ENCODE measurements at regions of chr14 and their contacts with region 1.

Region 1: DNA sequence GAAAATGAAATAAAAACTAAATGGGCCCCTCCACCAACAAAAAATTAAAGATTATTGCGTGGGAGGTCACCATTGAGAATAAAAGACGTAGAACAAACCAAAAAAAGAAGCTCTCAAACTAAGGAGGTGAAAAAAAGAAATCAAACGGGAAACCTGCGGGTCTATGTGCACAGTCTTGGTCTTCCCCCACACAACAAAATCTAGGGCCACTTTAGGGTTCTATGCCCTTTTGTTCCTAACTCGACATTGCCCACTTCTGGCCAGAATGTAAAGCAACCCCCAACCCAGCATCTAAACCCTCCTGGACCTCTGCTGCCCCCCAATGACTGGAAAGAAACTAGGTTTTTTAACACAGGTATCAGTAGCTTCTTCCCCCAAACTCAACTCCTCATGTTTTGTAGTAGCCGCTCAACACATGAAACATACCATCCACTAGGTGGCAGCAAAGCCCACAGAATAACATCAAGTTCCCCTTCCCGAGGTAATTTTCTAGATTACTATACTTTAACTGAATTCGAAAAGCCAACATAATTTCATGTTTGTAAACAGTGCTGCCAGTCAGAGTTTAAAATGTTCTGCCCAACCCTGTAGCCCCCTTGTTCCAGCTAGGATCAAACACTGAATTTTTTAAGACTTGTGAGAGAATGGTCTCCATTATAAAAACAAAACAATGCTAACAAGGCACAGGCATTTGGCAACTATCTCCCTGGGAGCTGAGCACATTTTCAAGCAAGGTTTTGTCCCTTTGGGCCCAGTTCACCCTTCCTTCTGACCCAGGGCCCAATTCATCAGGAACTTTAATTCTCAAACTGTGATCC is 18.7 kb downstream of the DAD1 start:
- DNase-seq: peak; percentile 83
- H3K4me3 ChIP-seq: no peak overlapping the region
- H3K27ac ChIP-seq: no peak overlapping the region
- H3K4me1 ChIP-seq: peaks cover 40% of the 10 kb centered on the region
- H3K27me3 ChIP-seq: no peaks in the 10 kb centered on the region
- CTCF ChIP-seq: peak; percentile 55 to 63
- POLR2A ChIP-seq: no peak

Region 2: DNA sequence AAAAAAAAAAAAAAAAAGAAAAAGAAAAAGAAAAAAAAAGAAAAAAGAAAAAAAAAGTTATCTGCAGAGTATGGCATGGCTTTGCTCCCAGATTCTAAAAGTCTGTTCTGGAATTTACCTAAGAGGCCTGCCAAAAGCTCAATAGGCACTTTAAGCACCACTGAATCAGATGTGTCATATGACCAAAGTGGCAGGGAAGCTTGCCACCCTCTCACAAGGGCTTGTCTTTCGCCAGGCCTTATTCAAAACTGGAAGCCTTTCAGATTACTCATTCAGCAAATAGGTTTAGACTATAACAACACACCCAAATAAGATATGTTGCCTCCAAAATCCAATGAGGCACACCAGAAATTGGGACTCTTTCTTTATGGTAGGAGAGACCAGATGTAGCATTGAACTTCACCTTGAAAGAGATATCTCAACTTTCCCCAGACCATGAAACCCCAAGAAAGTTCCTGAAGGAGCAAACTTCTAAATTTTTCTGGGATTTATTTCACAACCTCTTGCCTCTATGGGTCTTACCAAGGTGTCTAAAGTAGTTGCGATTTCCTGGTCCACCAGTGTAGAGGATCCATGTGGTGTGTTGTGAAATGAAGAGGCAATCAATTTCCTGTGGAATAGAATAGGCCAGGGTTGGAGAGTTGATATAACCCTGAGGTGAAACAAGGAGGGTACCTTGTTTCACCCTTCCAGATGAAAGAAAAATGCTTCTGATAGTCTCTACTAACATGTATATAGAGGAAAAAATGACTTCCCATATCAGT is 200.1 kb before region 1 on chr14:
- CTCF ChIA-PET with region 1: no interaction called
- POLR2A ChIA-PET with region 1: no interaction called
- dilution Hi-C with region 1: no loop called
- intact Hi-C with region 1: no loop called
- DNase-seq: no peak
- H3K4me3 ChIP-seq: no peak overlapping the region
- H3K27ac ChIP-seq: no peak overlapping the region
- H3K4me1 ChIP-seq: no peaks in the 10 kb centered on the region
- H3K27me3 ChIP-seq: peaks cover 19 to 21% of the 10 kb centered on the region in 2 experiments
- CTCF ChIP-seq: no peak
- POLR2A ChIP-seq: no peak

Region 3: DNA sequence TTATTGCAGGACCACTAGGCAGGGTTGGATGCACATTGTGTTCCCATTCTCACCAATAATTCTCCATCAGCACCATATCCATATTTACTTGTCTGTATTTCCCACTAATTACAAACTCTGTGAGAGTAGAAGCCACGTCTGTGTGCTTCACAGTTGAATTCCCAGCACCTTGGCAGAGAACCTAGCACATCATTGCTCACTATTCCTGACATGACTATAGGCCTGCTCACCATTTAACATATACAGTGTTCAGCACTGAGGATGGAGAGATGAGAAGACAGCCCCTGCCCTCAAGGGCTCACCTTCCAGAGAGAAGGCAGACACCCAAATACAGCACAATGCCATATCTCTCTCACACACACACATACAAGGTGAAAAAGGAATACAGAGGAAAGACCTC is 13.7 kb after region 1 on chr14:
- CTCF ChIA-PET with region 1: interaction called, 102 read pairs
- POLR2A ChIA-PET with region 1: interaction called, 4 read pairs
- dilution Hi-C with region 1: no loop called
- intact Hi-C with region 1: loop called (anchors 1 kb)
- DNase-seq: no peak
- H3K4me3 ChIP-seq: no peak overlapping the region
- H3K27ac ChIP-seq: no peak overlapping the region
- H3K4me1 ChIP-seq: peaks cover 20% of the 10 kb centered on the region
- H3K27me3 ChIP-seq: no peaks in the 10 kb centered on the region
- CTCF ChIP-seq: no peak
- POLR2A ChIP-seq: no peak

Region 4: DNA sequence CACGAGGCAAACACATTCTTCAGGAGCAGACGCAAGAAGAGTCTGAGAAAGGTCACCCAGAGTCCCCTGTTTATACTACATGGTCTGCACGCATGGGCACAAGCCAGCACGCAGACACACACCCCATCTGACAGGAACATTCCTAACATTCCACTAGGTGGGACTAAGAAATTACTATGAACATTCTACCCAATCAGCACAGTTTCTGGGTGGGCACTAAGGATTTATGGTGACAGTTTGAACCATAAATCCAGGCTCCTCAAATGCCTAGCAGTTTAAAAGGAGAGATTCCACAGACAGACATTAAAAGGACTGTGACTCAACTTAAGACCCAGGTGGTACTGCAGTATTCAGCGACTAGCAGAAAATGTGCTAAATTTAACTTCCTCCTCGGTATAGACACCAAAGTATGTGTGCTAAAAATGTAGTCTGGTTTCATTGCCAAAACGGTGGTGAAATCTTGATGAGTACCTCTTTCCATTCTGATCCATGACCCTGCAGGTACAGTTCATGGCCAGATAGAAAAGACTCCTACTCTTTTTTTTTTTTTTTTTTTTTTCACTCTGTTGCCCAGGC is 44.0 kb after region 1 on chr14:
- CTCF ChIA-PET with region 1: interaction called, 5 read pairs
- POLR2A ChIA-PET with region 1: no interaction called
- dilution Hi-C with region 1: no loop called
- intact Hi-C with region 1: loop called (anchors 1 kb)
- DNase-seq: peak; percentile 99
- H3K4me3 ChIP-seq: no peak overlapping the region
- H3K27ac ChIP-seq: peak overlapping the region; percentile 91
- H3K4me1 ChIP-seq: peaks cover 20% of the 10 kb centered on the region
- H3K27me3 ChIP-seq: no peaks in the 10 kb centered on the region
- CTCF ChIP-seq: no peak
- POLR2A ChIP-seq: peak; percentile 56

Region 5: DNA sequence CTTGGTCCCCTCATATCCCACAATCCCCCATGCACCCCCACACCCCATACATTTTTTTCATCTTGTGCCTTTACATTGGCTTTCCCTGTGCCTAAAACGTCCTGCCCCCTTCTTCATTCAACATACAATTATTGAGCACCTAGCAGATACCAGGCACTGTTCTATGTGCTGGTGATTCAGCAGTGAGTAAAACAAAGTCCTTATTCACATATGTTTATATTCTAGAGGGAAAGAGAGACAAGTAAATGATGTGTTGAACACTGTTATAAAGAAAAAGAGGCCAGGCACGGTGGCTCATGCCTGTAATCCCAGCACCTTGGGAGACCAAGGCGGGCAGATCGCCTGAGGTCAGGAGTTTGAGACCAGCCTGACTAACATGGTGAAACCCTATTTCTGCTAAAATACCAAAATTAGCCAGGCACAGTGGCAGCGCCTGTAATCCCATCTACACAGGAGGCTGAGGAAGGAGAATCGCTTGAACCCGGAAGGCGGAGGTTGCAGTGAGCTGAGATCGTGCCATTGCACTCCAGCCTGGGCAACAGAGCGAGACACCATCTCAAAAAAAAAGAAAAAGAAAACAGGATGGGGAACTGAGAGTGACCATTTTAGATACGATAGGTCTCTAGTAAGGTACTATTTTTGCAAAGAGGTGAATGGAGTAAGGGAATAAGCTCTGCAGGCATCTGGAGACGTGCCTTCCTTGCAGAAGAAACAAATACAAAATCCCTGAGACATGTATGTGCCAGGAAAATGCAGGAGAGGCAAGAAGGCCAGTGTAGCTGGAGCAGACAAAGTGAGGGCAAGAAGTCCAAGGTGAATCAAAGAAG is 232.7 kb after region 1 on chr14:
- CTCF ChIA-PET with region 1: interaction called, 14 read pairs
- POLR2A ChIA-PET with region 1: no interaction called
- dilution Hi-C with region 1: no loop called
- intact Hi-C with region 1: no loop called
- DNase-seq: no peak
- H3K4me3 ChIP-seq: no peak overlapping the region
- H3K27ac ChIP-seq: no peak overlapping the region
- H3K4me1 ChIP-seq: no peaks in the 10 kb centered on the region
- H3K27me3 ChIP-seq: no peaks in the 10 kb centered on the region
- CTCF ChIP-seq: no peak
- POLR2A ChIP-seq: no peak

Region 6: DNA sequence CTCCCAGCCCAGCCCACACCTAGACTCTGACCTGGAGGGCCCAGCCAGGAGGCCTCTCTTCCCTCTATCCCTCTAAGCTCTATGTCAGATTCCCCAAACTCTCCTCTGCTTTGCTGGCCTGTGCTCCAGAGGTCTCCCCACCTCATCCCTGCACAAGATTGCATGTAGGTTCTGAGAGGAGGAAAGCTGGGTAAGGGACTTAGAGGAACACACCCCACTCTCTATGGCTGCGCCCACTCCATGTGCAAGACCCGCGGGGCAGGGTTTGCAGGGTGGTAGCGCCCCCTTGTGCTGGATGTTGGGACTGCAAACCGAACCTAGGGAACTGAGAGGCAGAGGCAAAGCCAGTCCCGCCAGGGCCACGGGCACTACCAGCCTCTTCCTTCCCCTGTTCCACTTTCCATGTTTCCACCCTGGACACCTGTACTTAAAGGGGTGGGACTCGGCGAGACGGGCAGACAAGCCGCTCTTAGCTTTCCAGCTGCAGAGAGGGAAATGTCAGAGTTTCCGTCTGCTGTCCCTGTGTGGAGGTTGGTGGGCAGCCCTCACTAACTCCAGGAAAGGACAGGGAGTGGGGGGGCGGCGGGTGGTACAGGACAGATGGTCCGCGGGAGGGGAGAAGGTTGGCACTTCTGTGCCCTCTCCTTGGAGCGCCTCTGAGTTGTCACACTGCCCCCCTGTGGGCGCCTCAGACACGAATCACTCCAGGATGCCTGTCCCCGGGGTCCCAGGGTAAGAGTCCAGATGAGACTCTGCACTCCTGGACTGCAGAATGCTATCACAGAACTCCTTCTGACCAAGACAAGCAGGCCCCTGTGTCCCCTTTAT is 282.8 kb after region 1 on chr14:
- CTCF ChIA-PET with region 1: interaction called, 106 read pairs
- POLR2A ChIA-PET with region 1: no interaction called
- dilution Hi-C with region 1: no loop called
- intact Hi-C with region 1: loop called (anchors 1 kb)
- DNase-seq: peak; percentile 85
- H3K4me3 ChIP-seq: peak overlapping the region in 2 of 3 experiments; percentile 32 to 52
- H3K27ac ChIP-seq: peak overlapping the region; percentile 98
- H3K4me1 ChIP-seq: peaks cover 49% of the 10 kb centered on the region
- H3K27me3 ChIP-seq: no peaks in the 10 kb centered on the region
- CTCF ChIP-seq: peak; percentile 85 to 93
- POLR2A ChIP-seq: no peak